ENCODE measurements at regions of chr1 and their contacts with region 1.

Region 1: DNA sequence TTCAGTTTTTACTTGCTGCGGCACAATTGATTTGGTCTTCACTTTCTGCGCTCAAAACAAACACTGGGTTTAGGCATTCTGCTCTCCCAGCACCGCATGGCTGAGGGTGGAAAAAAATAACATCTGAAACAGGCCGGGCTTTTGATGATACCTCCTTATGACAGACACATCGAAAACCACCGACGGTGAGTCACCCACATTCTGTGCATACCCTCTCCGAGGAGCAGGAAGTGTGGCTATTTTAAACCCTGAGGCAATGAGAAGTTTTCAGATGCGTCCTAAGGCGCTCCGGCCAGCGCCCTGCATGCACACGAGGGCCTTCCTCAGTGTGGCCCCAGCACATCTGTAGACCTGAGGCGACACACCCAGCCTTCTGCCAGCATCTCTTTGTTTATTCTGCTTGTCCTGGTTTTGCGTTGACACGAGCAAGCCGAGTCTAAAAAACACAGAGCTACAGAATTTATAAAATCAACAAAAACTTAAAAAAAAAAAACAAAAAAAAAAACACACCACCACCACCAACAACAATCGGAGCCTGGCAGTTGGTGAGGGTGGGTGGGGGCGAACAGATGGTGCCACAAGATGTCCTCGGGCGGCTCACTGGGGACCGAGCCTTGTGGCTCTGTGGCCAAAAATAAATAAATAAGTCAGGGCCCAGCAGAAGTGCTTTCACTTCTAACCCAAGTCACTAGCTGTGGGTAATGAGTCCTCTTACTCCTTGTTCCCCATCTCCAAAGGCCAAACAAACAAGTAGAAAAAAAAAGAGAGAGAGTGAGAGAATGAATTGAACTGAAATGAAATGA is 162.6 kb upstream of the IRF2BP2 start:
- DNase-seq: peak; percentile 66
- ATAC-seq: peak; percentile 81
- H3K4me3 Mint-ChIP-seq: peak overlapping the region; percentile 77
- H3K27ac Mint-ChIP-seq: peak overlapping the region; percentile 96
- H3K4me1 Mint-ChIP-seq: peaks cover 57% of the 10 kb centered on the region
- H3K27me3 Mint-ChIP-seq: no peaks in the 10 kb centered on the region
- CTCF ChIP-seq: no peak

Region 2: GRCh38 chr1:234599617-234600417 is 172.7 kb before region 1 on chr1:
- CTCF ChIA-PET with region 1: interaction called, 3 read pairs
- POLR2A ChIA-PET with region 1: interaction called, 13 read pairs
- intact Hi-C with region 1: loop called (anchors 1 kb)
- DNase-seq: peak; percentile 67
- ATAC-seq: peak; percentile 73
- H3K4me3 Mint-ChIP-seq: peak overlapping the region; percentile 86
- H3K27ac Mint-ChIP-seq: peak overlapping the region; percentile 89
- H3K4me1 Mint-ChIP-seq: peaks cover 66% of the 10 kb centered on the region
- H3K27me3 Mint-ChIP-seq: no peaks in the 10 kb centered on the region
- CTCF ChIP-seq: no peak

Region 3: GRCh38 chr1:234842726-234843641 is 70.4 kb after region 1 on chr1:
- CTCF ChIA-PET with region 1: no interaction called
- POLR2A ChIA-PET with region 1: interaction called, 8 read pairs
- intact Hi-C with region 1: loop called (anchors 1 kb)
- DNase-seq: peak; percentile 40
- ATAC-seq: peak; percentile 76
- H3K4me3 Mint-ChIP-seq: peak overlapping the region; percentile 62
- H3K27ac Mint-ChIP-seq: peak overlapping the region; percentile 71
- H3K4me1 Mint-ChIP-seq: peaks cover 52% of the 10 kb centered on the region
- H3K27me3 Mint-ChIP-seq: no peaks in the 10 kb centered on the region
- CTCF ChIP-seq: no peak

Region 4: GRCh38 chr1:234955107-234955731 is 182.7 kb after region 1 on chr1:
- CTCF ChIA-PET with region 1: no interaction called
- POLR2A ChIA-PET with region 1: interaction called, 10 read pairs
- intact Hi-C with region 1: no loop called
- DNase-seq: no peak
- ATAC-seq: peak; percentile 63
- H3K4me3 Mint-ChIP-seq: peak overlapping the region; percentile 76
- H3K27ac Mint-ChIP-seq: peak overlapping the region; percentile 88
- H3K4me1 Mint-ChIP-seq: peaks cover 58% of the 10 kb centered on the region
- H3K27me3 Mint-ChIP-seq: no peaks in the 10 kb centered on the region
- CTCF ChIP-seq: no peak

Region 5: DNA sequence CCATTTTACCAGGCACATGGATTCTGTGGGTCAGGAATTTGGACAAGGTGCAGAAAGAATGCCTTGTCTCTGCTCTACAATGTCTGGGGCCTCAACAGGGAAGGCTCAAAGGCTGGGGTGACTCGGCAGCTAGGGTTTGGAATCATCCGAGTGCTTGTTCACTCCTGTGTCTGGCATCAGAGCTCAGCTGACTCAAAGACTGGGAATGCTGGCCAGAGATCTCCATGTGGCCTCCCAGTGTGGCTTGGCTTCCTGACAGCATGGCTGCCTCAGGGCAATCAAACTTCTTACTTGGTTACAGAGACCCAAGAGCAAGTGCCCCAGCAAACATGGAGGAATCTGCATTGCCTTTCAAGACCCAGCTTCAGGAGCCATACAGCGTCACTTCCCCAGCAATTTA is 245.6 kb after region 1 on chr1:
- CTCF ChIA-PET with region 1: no interaction called
- POLR2A ChIA-PET with region 1: interaction called, 6 read pairs
- intact Hi-C with region 1: loop called (anchors 1 kb)
- DNase-seq: no peak
- ATAC-seq: no peak
- H3K4me3 Mint-ChIP-seq: no peak overlapping the region
- H3K27ac Mint-ChIP-seq: peak overlapping the region; percentile 68
- H3K4me1 Mint-ChIP-seq: peaks cover 72% of the 10 kb centered on the region
- H3K27me3 Mint-ChIP-seq: no peaks in the 10 kb centered on the region
- CTCF ChIP-seq: no peak